Activated CD8-positive, alpha-beta memory T cell treated with anti-CD3 and anti-CD28 coated beads, Interleukin-2, amount 10 ng/mL, durations not matched to agents 7 days and 5 days (primary cell): ENCODE measurements at regions of chr7 and their contacts with region 1.

Region 1: GRCh38 chr7:100889761-100890634 is 483 bp upstream of the UFSP1 start:
- DNase-seq: peak; percentile 94
- ATAC-seq: peak; percentile 92
- H3K4me3 Mint-ChIP-seq: peak overlapping the region; percentile 77
- H3K27ac Mint-ChIP-seq: peak overlapping the region; percentile 77
- H3K4me1 Mint-ChIP-seq: peaks cover 46% of the 10 kb centered on the region
- H3K27me3 Mint-ChIP-seq: peaks cover 27% of the 10 kb centered on the region

Region 2: DNA sequence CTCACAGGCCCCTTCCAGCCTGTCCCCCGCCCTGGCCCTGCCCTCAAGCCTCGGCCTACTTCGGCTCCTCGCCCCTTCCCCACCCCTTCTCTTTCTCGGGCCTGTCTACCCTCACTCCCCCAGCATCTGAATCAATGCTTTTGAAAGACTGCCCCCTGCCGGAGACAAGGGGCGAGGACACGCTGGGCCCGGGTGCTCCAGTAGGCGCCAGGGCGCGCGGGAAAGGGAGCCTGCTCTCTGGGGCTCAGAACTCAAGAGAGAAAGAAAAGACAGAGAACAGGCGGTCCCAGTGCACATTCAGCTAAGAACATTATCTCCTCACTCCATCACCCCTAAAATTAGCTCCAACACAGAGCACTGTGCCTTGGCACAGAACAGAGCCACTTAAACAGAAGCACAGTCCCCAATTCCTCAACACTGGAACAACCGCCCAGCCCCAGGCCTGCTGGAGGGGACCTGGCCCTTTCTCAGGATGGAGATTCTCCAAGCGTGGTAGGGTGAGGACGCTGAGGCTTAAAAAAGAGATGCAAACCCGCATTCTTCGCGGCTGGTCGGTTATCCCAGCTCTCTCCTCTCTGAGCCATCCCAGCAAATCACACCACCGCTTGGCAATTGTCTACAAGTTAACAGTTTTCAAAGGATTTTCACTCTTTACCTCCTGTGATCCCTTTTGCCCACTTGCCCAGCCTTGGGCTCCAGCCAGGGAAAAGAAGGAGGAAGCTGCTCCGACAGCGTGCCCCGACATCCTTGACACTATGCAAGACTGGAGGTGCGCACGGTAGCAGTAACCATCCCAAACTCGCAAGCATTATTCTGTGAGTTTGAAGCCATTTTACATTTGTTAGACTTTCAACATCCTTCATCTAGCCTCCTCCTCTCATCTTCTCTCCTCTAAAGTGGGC is 198.1 kb before region 1 on chr7:
- CTCF ChIA-PET with region 1: no interaction called
- DNase-seq: peak; percentile 86
- ATAC-seq: peak; percentile 76
- H3K4me3 Mint-ChIP-seq: peak overlapping the region; percentile 96
- H3K27ac Mint-ChIP-seq: peak overlapping the region; percentile 71
- H3K4me1 Mint-ChIP-seq: peaks cover 28% of the 10 kb centered on the region
- H3K27me3 Mint-ChIP-seq: peaks cover 13% of the 10 kb centered on the region

Region 3: DNA sequence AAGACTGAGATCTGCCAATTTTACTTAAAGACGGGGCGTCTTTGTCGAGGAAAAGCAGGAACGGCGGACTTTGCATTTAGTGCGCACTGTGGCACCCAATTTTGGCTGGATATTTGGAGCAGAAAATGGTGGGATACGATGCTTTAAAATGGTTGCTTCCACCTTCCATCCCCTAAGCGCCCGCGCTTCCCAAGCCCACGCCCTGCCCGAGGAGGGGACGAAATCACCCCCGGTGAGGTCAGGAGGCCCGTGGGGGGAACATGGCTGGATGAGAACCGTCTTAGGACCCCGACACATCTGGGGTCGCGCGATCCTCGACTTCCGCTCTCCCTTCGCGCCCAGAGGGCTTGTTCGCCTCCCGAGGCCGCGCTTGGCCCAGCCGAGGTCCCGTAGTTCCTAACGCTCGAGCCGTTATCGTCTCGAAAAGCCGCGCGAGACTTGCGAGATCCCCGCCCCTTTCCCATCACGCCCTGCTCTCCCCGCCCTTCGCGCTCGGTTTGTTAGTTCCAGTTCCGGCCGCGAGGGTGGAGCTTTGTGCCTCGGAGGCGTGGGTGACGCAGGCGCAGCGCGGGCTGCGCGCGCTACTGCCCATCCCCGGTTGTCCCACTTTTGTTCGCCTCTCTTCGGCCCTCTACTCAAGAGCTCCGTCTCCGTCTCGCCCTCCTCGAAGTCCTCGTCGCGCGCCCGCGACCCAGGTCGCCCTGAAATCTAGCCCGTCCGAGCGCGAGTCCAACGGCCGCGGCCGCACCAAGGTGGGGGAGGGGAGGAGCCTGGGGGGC is 15.2 kb before region 1 on chr7 and contains the start of gene SRRT:
- CTCF ChIA-PET with region 1: interaction called, 44 read pairs
- DNase-seq: peak; percentile 99
- ATAC-seq: peak; percentile 96
- H3K4me3 Mint-ChIP-seq: peak within 1 kb of the TSS; percentile 100
- H3K27ac Mint-ChIP-seq: peak within 1 kb of the TSS; percentile 100
- H3K4me1 Mint-ChIP-seq: peaks cover 51% of the 10 kb centered on the region
- H3K27me3 Mint-ChIP-seq: no peaks in the 10 kb centered on the region
- total RNA-seq, gene SRRT: 290 to 312 TPM

Region 4: GRCh38 chr7:101058355-101058754 is 168.4 kb after region 1 on chr7:
- CTCF ChIA-PET with region 1: interaction called, 18 read pairs
- DNase-seq: peak; percentile 71
- ATAC-seq: no peak
- H3K4me3 Mint-ChIP-seq: no peak overlapping the region
- H3K27ac Mint-ChIP-seq: no peak overlapping the region
- H3K4me1 Mint-ChIP-seq: no peaks in the 10 kb centered on the region
- H3K27me3 Mint-ChIP-seq: peaks cover 22% of the 10 kb centered on the region